Motor neuron (in vitro differentiated cells): ENCODE measurements at regions of chr12 and their contacts with region 1.

Region 1: DNA sequence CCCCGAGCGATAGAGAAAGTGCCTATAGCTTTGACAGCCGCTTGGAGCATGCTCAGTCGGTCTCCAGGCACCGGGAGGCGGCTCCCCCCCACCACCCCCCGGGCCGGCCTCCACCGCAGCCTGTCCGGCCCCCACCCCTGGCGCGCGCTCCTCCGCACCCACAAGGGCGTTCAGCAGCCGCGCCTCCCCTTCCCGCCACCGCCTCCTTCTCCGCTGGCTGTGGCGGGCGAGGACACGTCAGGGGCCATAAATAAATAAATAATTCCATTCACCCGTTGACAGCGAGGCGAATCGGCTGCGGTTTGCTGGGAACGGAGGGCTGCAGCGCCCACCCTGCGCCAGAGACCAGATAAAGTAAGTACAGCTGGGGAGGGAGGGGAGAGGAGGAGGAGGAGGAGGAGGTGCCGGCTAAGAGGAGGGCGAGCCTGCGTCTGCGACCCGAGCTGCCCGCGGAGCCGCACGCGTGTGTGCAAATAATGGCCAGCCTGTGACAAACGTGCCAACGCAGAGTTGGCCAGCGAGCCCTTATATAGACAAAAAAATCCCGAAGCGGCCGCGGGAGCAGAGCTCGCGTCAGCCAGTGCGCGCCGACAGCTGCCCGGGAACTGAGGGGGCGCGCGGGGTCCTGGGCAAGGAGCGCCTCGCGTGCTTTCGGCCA is at the start of gene SLC16A7:
- ATAC-seq: peak; percentile 58 to 87 (median 82)
- H3K4me3 ChIP-seq: peak within 1 kb of the TSS; percentile 41 to 61 (median 51)
- H3K27ac ChIP-seq: peak within 1 kb of the TSS; percentile 91 to 92
- H3K4me1 ChIP-seq: peaks cover 0 to 10% of the 10 kb centered on the region in 2 donors
- total RNA-seq, gene SLC16A7: 2.5 to 137 (median 6.4) TPM

Region 2: DNA sequence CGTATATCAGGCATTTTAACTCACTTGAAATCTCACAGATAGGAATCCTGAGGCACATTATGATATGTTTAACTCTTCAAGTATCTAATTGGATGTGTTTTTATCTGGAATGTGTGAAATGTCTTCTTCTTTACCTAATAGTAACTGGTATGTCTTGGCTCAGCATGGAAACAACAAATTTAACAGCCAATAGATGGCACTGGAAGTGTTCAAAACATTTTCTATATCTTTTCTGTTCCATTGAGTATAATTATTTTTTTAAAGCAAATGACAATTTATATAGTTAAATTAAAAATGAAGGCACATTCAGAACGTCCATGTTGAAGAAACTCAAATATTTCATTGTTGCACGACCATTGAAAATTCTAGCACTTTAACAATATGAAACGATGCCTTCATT is 164.7 kb before region 1 on chr12:
- in situ Hi-C with region 1: loop called in 1 of 9 experiments (anchors 25 kb)
- ATAC-seq: peak in 3 of 8 experiments; percentile 36 to 49 (median 38)
- H3K4me3 ChIP-seq: no peak overlapping the region
- H3K27ac ChIP-seq: no peak overlapping the region
- H3K4me1 ChIP-seq: no peaks in the 10 kb centered on the region